ENCODE measurements at regions of chr4 and their contacts with region 1.

Region 1: DNA sequence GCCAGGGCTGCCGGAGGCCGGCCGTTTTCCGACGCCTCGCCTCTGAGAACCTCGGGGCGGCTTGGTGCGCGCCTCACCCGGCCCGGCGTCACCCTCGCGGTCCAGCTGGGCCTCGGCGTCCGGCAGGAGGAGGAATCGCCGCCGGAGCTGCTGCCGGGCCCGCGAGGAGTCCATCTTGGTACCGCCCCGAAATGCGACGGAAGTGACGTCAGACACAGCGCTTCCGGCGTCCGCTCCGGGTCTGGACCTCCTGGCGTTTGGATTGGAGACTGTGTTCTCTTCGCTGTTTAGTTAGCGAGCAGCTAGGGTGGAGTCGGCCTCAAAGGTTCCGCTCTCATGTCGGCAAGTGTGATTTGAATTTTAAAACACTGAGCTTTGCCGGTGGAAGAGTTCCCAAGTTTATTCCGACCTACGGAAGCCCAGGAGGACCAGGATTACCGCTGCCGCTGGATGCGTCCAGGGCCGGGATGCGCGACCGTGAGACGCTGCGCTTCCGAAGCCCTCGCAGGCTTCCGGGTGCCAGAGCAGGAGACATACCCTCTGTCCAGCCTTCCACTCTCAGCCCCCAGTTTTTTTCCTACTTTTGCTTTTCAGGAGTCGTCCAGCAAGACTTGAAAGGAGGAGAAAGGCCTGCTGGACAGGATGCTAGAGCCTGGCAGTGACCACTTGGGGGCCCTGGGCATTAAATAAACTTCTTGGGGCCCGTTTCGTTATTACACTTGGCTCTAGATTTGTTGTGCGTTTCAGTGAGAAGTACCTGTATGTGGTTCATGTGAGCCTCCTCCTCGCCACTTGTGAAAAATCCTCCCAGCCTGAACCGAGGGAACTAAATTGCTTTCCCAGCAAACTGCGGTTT is at the start of gene TMEM128:
- DNase-seq: peak; percentile 91 to 96
- ATAC-seq: peak; percentile 96 to 99 (median 98)
- H3K4me3 ChIP-seq: peak within 1 kb of the TSS; percentile 89
- H3K27ac ChIP-seq: peak within 1 kb of the TSS; percentile 91
- H3K4me1 ChIP-seq: peaks cover 23% of the 10 kb centered on the region
- H3K27me3 ChIP-seq: no peaks in the 10 kb centered on the region
- CTCF ChIP-seq: peak; percentile 10
- total RNA-seq, gene TMEM128: 5.5 to 7.8 (median 6.5) TPM

Region 2: GRCh38 chr4:4289941-4290850 is 41.9 kb after region 1 on chr4 and contains the starts of genes LYAR and ZBTB49:
- intact Hi-C with region 1: loop called (anchors 5 kb)
- DNase-seq: peak; percentile 93 to 97
- ATAC-seq: peak; percentile 93 to 97 (median 96)
- H3K4me3 ChIP-seq: peak within 1 kb of the TSS; percentile 93
- H3K27ac ChIP-seq: peak within 1 kb of the TSS; percentile 91
- H3K4me1 ChIP-seq: peaks cover 41% of the 10 kb centered on the region
- H3K27me3 ChIP-seq: no peaks in the 10 kb centered on the region
- CTCF ChIP-seq: no peak
- total RNA-seq, gene LYAR: 12.8 to 26.6 (median 15.1) TPM
- total RNA-seq, gene ZBTB49: 3.4 to 7.0 (median 6.0) TPM

Region 3: DNA sequence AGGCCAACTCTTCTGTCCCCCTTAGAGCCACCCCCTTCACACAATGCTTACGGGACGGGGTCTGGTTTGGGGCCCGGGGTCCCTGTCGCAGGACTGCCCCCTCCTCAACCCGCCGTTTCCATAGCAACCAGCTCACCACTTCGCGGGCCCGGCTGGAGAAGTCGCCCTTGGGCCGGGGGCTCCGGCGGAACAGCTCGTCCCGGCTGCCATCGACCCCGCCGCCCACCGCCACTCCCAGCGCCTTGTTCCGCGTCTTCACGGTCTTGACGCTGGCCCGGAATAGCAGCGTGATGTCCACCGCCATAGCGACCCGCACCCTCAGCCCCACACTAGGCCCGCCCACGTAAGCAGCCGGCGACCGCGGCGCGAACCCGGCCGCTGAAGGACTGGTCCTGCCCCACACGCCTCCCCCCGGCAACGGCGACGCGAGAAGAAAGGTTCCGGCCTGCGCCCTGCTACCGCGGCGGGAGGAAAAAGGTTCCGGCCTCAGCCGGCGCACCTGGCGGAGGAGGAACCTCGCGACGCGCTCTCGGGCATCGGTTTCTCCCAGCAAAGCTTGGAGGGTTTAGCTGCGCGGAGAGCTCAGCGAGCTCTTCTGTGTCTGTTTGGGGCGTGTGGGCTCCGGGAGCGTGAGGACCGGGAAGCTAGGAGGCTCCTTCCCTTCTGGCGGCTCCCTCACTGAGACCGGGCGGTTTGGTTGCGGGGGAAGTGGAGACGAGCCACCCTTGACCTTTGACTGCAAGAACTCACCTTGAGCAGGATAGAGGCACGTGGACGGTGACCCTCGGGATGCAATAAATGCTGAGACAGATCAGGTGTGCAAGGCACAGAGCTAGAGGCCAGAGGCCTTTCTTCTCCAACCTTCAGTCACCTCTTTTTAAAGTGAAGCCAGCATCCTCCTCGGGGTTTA is 293.7 kb after region 1 on chr4 and contains the start of gene STX18:
- intact Hi-C with region 1: loop called (anchors 5 kb)
- DNase-seq: peak; percentile 87 to 91
- ATAC-seq: peak; percentile 98 to 99 (median 99)
- H3K4me3 ChIP-seq: peak within 1 kb of the TSS; percentile 99
- H3K27ac ChIP-seq: peak within 1 kb of the TSS; percentile 89
- H3K4me1 ChIP-seq: peaks cover 23% of the 10 kb centered on the region
- H3K27me3 ChIP-seq: no peaks in the 10 kb centered on the region
- CTCF ChIP-seq: no peak
- total RNA-seq, gene STX18: 12.1 to 21.1 (median 19.4) TPM

Measured in psoas muscle (tissue), 8 donors.